ENCODE measurements at regions of chr3 and their contacts with region 1.

Region 1: DNA sequence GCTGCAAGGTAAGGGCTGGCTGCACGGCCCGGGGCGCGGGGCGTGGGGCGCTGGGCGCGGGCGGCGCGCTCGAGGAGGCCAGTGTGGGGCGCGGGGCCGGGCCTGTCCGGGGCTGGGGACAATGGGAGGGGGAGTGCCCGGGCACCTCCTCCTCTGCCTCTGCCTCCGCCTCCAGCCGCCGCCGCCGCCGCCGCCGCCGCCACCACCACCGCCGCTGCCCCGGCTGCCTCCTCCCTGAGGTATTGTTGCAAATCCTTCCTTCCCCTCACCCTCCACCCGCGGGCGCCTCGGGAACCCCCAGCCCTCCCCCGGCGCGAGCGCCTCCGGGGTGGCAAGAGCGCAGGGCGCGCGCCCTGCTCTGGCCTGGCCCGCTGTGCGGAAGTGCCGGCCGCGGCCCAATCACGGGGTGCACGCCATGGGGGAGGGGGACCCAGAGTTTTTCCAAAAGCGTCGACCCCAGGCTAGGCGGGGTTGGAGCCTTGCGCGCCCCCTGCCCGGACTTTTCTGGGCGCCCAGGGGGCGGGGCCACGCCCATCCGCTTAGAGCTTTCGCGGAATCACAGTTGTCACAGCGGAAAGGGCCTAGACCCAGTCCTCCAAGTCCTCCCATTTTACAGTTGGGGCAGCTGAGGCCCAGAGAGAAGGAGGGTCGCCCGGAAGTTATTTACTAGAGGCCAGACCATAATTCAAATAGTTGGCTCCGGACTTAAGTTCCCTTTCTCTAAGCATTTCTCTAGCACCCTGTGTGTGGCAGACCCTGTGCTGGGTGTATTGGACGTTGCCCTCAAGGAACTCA is at the start of gene LPP:
- DNase-seq: peak; percentile 90
- H3K4me3 Mint-ChIP-seq: peak within 1 kb of the TSS; percentile 93
- H3K27ac Mint-ChIP-seq: peak within 1 kb of the TSS; percentile 95
- H3K4me1 Mint-ChIP-seq: peaks cover 61% of the 10 kb centered on the region
- H3K27me3 Mint-ChIP-seq: no peaks in the 10 kb centered on the region
- total RNA-seq, gene LPP: 51.4 to 52.4 TPM

Region 2: DNA sequence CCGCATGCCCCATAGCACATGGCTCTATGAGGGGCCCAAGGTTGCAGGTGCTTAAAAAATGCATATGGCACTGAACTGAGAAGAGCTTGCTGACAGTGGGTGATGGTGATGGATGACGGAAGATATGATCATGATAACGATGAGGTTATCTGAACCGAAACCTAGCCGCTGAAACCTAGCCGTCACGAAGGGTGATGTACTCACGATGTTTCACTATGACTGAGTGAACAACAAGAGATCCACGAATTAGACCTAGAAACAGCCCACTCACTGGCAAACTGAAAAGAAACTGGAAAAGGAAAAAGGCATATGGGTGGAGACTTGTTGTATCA is 351.3 kb before region 1 on chr3:
- CTCF ChIA-PET with region 1: interaction called, 4 read pairs
- POLR2A ChIA-PET with region 1: interaction called, 14 read pairs
- DNase-seq: peak; percentile 88
- H3K4me3 Mint-ChIP-seq: peak overlapping the region; percentile 61
- H3K27ac Mint-ChIP-seq: peak overlapping the region; percentile 85
- H3K4me1 Mint-ChIP-seq: peaks cover 94% of the 10 kb centered on the region
- H3K27me3 Mint-ChIP-seq: no peaks in the 10 kb centered on the region

Region 3: GRCh38 chr3:188000361-188000861 is 153.8 kb before region 1 on chr3:
- CTCF ChIA-PET with region 1: no interaction called
- POLR2A ChIA-PET with region 1: interaction called, 22 read pairs
- DNase-seq: peak; percentile 29
- H3K4me3 Mint-ChIP-seq: peak overlapping the region; percentile 72
- H3K27ac Mint-ChIP-seq: peak overlapping the region; percentile 99
- H3K4me1 Mint-ChIP-seq: peaks cover 74% of the 10 kb centered on the region
- H3K27me3 Mint-ChIP-seq: no peaks in the 10 kb centered on the region

Region 4: DNA sequence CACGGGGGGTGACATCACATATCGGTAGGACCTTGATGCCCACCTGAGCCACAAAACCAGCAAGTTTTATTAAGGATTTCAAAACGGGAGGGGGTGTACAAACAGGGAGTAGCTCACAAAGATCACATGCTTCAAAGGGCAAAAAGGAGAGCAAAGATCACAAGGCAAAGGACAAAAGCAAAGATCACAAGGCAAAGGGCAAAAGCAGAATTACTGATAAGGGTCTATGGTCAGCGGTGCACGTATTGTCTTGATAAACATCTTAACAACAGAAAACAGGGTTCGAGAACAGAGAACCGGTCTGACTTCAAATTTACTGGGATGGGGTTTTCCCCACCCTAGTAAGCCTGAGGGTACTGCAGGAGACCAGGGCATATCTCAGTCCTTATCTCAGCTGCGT is 143.7 kb before region 1 on chr3:
- CTCF ChIA-PET with region 1: no interaction called
- POLR2A ChIA-PET with region 1: no interaction called
- DNase-seq: no peak
- H3K4me3 Mint-ChIP-seq: no peak overlapping the region
- H3K27ac Mint-ChIP-seq: no peak overlapping the region
- H3K4me1 Mint-ChIP-seq: peaks cover 23% of the 10 kb centered on the region
- H3K27me3 Mint-ChIP-seq: peaks cover 6% of the 10 kb centered on the region

Region 5: GRCh38 chr3:188164248-188164687 is 10.1 kb after region 1 on chr3:
- CTCF ChIA-PET with region 1: interaction called, 6 read pairs
- POLR2A ChIA-PET with region 1: interaction called, 50 read pairs
- DNase-seq: no peak
- H3K4me3 Mint-ChIP-seq: no peak overlapping the region
- H3K27ac Mint-ChIP-seq: peak overlapping the region; percentile 70
- H3K4me1 Mint-ChIP-seq: peaks cover 63% of the 10 kb centered on the region
- H3K27me3 Mint-ChIP-seq: no peaks in the 10 kb centered on the region

Region 6: GRCh38 chr3:188170461-188171459 is 16.5 kb after region 1 on chr3:
- CTCF ChIA-PET with region 1: interaction called, 10 read pairs
- POLR2A ChIA-PET with region 1: interaction called, 50 read pairs
- DNase-seq: peak; percentile 47
- H3K4me3 Mint-ChIP-seq: no peak overlapping the region
- H3K27ac Mint-ChIP-seq: peak overlapping the region; percentile 69
- H3K4me1 Mint-ChIP-seq: peaks cover 53% of the 10 kb centered on the region
- H3K27me3 Mint-ChIP-seq: no peaks in the 10 kb centered on the region

Region 7: GRCh38 chr3:188309437-188310269 is 155.4 kb after region 1 on chr3:
- CTCF ChIA-PET with region 1: no interaction called
- POLR2A ChIA-PET with region 1: no interaction called
- DNase-seq: peak; percentile 35
- H3K4me3 Mint-ChIP-seq: no peak overlapping the region
- H3K27ac Mint-ChIP-seq: no peak overlapping the region
- H3K4me1 Mint-ChIP-seq: peaks cover 17% of the 10 kb centered on the region
- H3K27me3 Mint-ChIP-seq: peaks cover 41% of the 10 kb centered on the region